ENCODE measurements at regions of chr21 and their contacts with region 1.

Region 1: DNA sequence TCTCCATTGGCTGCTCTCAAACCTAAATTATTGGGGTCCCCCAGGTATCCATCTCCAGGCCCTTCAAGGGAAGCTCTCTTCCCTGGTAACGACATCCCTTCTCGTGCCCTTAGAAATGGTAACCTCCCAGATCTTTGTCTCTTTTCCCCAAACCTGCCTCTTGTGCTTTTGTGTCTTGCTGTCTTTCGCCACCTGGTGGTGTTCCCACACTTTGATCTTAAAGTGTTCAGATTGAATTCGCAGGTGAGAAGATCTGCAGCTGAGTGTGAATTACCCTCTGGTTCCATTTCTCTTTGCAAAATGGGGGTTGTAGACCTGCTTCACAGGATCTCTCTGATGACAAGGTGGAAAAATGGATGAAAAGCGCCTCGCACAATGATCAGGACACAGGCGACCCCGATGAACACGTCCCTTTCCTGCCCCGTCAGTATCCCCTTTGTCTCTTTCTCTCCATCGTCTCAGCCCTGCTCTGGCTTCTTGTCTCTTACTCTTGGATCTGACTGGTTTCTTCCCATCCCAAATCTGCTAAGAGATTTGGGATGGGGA is 53.1 kb downstream of the DOP1B start:
- DNase-seq: peak; percentile 72 to 82 (median 76)
- ATAC-seq: peak; percentile 72
- H3K4me3 ChIP-seq: no peak overlapping the region
- H3K27ac ChIP-seq: no peak overlapping the region
- H3K4me1 ChIP-seq: peaks cover 8% of the 10 kb centered on the region
- H3K27me3 ChIP-seq: no peaks in the 10 kb centered on the region
- CTCF ChIP-seq: peak in 6 of 7 experiments; percentile 33 to 80 (median 75)
- POLR2A ChIP-seq: no peak

Region 2: GRCh38 chr21:35963920-35964451 is 245.7 kb before region 1 on chr21:
- intact Hi-C with region 1: no loop called
- DNase-seq: no peak
- ATAC-seq: no peak
- H3K4me3 ChIP-seq: no peak overlapping the region
- H3K27ac ChIP-seq: no peak overlapping the region
- H3K4me1 ChIP-seq: no peaks in the 10 kb centered on the region
- H3K27me3 ChIP-seq: no peaks in the 10 kb centered on the region
- CTCF ChIP-seq: no peak
- POLR2A ChIP-seq: no peak

Region 3: GRCh38 chr21:36149788-36150711 is 59.6 kb before region 1 on chr21:
- intact Hi-C with region 1: loop called (anchors 5 kb)
- DNase-seq: peak in 1 of 4 donors; percentile 57
- ATAC-seq: no peak
- H3K4me3 ChIP-seq: no peak overlapping the region
- H3K27ac ChIP-seq: peak overlapping the region in 2 of 4 donors; percentile 45 to 52
- H3K4me1 ChIP-seq: peaks cover under 1% of the 10 kb centered on the region
- H3K27me3 ChIP-seq: no peaks in the 10 kb centered on the region
- CTCF ChIP-seq: no peak
- POLR2A ChIP-seq: peak in 1 of 3 donors; percentile 55